GM12878 (cell line): ENCODE measurements at regions of chr12 and their contacts with region 1.

Region 1: DNA sequence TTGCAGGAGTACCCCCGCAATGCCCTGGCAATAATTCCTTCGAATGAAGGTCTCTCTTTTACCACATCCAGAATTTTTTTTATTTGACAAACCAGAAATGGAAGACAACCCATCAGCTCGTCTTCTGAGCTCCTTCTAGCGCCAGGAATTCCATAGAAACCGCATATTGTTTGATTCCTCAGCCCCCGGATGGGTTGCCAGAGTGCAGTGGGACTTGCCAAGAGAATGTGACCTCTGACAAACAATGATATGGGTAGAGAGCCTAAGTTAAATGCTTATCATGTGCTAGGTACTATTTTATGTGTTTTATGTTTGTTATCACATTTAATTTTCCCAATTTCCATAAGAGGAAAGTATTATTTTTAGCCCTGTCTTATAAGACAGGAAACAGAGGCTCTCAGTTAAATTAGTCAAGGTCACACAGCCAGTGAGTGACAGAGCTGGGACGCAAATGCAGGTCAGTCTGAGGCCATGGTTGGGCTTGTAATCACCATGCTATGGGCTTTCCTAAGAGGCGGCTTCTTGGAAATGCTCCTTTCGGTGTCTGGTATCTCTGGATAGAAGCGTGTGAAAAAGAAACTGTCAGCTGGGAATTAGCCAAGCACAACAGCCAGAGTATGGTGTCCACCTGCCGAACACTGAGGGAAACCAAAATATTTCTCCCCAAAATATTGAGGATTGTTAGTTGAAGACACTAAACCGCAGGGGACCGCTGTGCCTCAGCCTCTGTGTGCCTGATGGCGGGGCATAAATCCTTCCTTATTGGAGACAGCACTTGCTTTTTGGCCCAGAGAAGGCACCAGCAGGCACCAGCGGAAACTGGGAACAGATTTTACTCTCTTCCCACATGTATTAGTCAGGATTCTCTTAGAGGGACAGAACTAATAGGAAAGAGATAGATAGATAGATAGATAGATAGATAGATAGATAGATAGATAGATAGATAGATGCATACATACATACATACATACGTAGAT is 29.4 kb upstream of the ETFBKMT start:
- DNase-seq: no peak
- ATAC-seq: no peak
- H3K4me3 ChIP-seq: no peak overlapping the region
- H3K27ac ChIP-seq: no peak overlapping the region
- H3K4me1 ChIP-seq: peaks cover 8% of the 10 kb centered on the region; the same call in 1 of the 2 replicates
- H3K27me3 ChIP-seq: no peaks in the 10 kb centered on the region
- CTCF ChIP-seq: no peak
- EP300 ChIP-seq: no peak
- POLR2A ChIP-seq: no peak
- RAD21 ChIP-seq: no peak

Region 2: GRCh38 chr12:31324116-31324844 is 305.8 kb before region 1 on chr12:
- CTCF ChIA-PET with region 1: no interaction called
- POLR2A ChIA-PET with region 1: no interaction called
- RAD21 ChIA-PET with region 1: no interaction called
- SMC1A ChIA-PET with region 1: no interaction called
- in situ Hi-C with region 1: no loop called
- intact Hi-C with region 1: loop called (anchors 5 kb)
- DNase-seq: no peak
- ATAC-seq: peak; percentile 60
- H3K4me3 ChIP-seq: peak overlapping the region; percentile 92
- H3K27ac ChIP-seq: peak overlapping the region; percentile 95
- H3K4me1 ChIP-seq: peaks cover 7% of the 10 kb centered on the region; the same call in 1 of the 2 replicates
- H3K27me3 ChIP-seq: no peaks in the 10 kb centered on the region
- CTCF ChIP-seq: peak in 2 of 3 experiments; percentile 13 to 18; a peak in 2 of 6 replicates
- EP300 ChIP-seq: no peak
- POLR2A ChIP-seq: peak; percentile 76
- RAD21 ChIP-seq: no peak

Region 3: DNA sequence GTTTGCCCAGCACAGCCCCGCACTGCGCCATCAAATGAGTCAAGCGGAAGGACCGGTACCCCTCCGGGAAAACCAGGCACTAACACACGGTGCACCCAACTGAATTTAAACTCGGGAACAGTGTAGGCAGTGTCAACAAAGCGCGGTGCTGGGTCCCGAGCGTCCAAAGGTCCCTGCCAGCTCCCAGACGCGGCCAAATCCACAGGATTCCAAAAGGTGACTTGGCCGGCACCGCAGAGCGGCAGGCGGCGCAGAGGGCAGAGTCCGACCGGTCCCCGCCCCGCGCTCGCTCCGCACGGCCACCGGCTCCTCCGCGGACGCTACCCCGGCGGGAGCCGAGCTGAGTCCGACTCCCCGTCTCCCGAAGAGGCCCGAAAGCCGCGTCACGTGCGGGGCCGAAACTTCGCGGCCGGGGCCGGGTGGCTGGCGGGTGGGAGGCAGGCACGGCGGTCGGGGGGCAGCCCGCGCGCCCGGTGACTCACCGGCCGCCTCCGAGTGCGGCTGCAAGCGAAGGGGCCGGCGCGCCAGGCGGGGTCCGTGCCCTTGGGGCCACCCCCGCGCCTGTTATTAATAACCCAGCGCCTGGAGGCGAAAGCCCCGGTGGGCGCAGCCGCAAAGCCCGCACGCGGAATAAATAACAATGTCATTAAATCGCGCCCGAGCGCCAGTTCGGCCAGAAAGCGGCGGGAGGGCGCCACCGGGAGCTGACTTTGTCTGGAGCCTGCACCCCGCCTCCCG is 40.0 kb before region 1 on chr12:
- CTCF ChIA-PET with region 1: no interaction called
- POLR2A ChIA-PET with region 1: no interaction called
- RAD21 ChIA-PET with region 1: no interaction called
- SMC1A ChIA-PET with region 1: no interaction called
- in situ Hi-C with region 1: loop called (anchors 5 kb)
- intact Hi-C with region 1: no loop called
- DNase-seq: no peak
- ATAC-seq: peak; percentile 64
- H3K4me3 ChIP-seq: peak overlapping the region; percentile 87
- H3K27ac ChIP-seq: peak overlapping the region; percentile 93
- H3K4me1 ChIP-seq: peaks cover 27% of the 10 kb centered on the region
- H3K27me3 ChIP-seq: no peaks in the 10 kb centered on the region
- CTCF ChIP-seq: 0 out of 6 replicates have a peak, but pooled peaks of 1 of the 3 experiments have one; percentile 5
- EP300 ChIP-seq: no peak
- POLR2A ChIP-seq: peak; percentile 65; the same call in 1 of the 2 replicates
- RAD21 ChIP-seq: peak; percentile 34; the same call in 1 of the 2 replicates

Region 4: DNA sequence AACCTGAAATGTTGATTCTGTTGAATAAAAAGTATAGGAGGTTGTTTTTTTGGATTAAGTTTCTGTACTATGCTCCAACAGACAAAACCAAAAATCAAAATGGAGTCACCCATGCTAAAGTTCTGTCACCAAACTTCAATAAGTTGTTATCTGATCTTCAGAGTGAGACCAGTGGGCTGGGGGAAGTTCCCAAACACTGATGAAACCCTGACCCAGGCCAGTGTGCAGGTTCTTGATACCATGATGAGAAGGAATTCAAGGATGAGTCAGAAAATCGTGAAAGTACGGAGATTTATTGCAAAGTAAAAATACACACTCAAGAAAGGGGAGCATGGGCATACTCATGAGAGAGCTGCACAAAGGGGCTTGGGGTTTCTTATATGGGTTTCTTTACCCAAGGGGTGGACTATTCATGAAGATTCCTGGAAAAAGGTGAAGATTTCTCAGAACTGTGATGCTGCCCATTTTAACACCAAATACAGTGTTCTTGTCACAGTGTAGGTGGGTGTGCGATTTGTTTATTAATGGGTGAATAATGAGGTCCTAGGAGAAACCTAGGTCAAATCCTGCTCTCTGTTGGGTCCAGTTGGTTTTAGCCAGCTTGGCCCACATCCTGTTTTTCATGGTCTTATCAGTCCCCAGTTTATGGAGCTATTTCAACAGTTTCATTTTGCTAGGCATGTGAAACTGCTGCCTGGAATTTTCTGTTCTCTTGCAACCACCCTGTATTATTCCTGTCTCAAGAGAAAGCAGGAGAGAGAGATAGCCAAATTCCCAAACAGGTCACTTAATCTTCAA is 11.6 kb before region 1 on chr12:
- CTCF ChIA-PET with region 1: no interaction called
- POLR2A ChIA-PET with region 1: no interaction called
- RAD21 ChIA-PET with region 1: no interaction called
- SMC1A ChIA-PET with region 1: no interaction called
- in situ Hi-C with region 1: no loop called
- intact Hi-C with region 1: no loop called
- DNase-seq: no peak
- ATAC-seq: no peak
- H3K4me3 ChIP-seq: no peak overlapping the region
- H3K27ac ChIP-seq: no peak overlapping the region
- H3K4me1 ChIP-seq: peaks cover 12% of the 10 kb centered on the region
- H3K27me3 ChIP-seq: no peaks in the 10 kb centered on the region
- CTCF ChIP-seq: no peak
- EP300 ChIP-seq: no peak
- POLR2A ChIP-seq: no peak
- RAD21 ChIP-seq: no peak